ENCODE measurements at regions of chr17 and their contacts with region 1.

Region 1: DNA sequence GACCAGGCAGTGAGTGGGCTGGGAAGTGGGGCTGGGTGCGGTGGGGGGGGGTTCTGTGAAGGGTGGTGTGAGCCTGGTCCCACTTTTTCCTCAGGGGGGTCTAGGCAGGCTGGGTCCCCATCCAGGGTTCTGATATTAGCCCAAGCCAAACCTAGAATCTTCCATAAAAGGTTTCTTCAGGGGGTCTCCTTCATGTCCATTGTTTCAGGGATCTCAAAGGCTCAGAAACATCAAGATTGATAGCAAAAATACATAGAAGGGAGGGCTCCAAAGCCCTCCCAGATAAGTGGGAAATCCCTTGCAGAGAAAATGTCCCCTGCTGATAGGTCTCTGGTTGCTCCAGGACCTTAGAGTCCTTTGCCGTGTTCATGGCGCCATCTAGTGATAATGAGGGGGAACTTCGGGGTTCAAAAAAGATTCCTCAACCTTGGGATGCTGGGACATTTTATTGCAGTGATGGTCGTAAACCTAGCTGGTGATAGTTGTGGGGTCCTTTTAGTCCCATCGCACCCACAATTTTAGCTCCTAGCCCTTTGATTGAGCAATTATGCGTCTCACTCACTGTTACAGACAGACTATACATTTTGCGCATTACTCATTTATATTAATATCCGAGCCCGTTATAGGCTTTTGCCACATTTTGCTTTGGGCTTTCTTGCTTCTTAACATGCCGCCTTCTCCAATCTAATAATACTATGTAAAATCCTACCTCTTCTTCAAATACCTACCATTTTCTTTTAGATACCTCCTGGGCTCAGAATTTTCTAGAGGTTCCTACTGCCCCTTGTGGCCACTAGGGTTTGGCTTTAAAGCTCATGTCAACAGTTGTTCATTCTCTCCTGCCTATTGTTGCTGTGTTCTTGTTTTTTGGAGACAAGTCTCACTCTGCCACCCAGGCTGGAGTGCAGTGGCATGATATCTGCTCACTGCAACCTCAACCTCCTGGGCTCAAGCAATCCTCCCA is 35.1 kb downstream of the IGF2BP1 start:
- DNase-seq: no peak
- H3K4me3 ChIP-seq: no peak overlapping the region
- H3K27ac ChIP-seq: no peak overlapping the region
- H3K4me1 ChIP-seq: peaks cover 0 to 4% (median 2%) of the 10 kb centered on the region in 4 donors
- H3K27me3 ChIP-seq: peaks cover 0 to 36% (median 0%) of the 10 kb centered on the region in 4 donors
- CTCF ChIP-seq: peak; percentile 63 to 70 (median 66)
- EP300 ChIP-seq: no peak
- POLR2A ChIP-seq: no peak

Region 2: DNA sequence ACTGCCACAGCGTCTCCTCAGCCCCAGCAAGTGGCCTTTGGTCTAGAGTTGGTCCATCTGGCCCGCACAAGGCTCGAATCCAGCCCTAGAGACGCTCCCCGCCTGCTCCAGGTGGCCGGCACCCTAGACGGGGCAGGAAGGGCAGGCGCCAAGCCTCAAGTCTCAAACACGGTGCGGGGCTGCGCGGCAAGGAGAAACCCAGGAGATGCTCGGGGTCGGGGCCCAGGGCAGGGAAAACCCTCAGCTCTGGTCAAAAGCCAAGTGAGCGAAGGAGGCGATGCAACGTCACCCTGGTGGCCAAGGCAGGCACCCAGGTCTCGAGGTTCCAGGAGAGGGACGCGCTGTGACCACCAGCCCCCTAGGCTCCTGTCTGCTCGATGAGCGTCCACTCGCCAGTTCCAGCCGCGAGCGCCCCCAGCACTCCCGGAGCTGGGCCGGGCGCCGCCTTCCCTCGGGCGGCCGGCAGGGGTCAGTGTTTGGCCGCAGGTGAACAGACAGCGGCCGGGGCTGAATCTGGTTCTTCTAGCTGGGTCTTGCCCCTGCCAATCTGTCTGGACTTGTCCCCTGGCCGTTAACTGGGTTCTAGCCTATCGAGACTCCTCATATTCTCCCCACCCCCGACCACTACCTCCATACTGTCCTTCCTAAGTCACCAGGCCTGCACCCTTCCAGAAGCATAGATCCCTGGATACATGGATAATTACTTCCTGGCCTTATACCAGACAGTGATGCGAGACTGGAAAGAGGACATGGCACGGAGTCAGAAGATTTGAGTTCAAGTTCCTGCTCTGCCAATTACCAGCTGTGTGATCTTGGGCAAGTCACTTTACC is 353.9 kb before region 1 on chr17:
- intact Hi-C with region 1: loop called (anchors 5 kb)
- DNase-seq: no peak
- H3K4me3 ChIP-seq: peak overlapping the region in 1 of 4 donors; percentile 21
- H3K27ac ChIP-seq: no peak overlapping the region
- H3K4me1 ChIP-seq: peaks cover 0 to 9% (median 8%) of the 10 kb centered on the region in 4 donors
- H3K27me3 ChIP-seq: peaks cover 0 to 72% (median 9%) of the 10 kb centered on the region in 4 donors
- CTCF ChIP-seq: peak; percentile 83 to 95 (median 93)
- EP300 ChIP-seq: no peak
- POLR2A ChIP-seq: no peak

Region 3: DNA sequence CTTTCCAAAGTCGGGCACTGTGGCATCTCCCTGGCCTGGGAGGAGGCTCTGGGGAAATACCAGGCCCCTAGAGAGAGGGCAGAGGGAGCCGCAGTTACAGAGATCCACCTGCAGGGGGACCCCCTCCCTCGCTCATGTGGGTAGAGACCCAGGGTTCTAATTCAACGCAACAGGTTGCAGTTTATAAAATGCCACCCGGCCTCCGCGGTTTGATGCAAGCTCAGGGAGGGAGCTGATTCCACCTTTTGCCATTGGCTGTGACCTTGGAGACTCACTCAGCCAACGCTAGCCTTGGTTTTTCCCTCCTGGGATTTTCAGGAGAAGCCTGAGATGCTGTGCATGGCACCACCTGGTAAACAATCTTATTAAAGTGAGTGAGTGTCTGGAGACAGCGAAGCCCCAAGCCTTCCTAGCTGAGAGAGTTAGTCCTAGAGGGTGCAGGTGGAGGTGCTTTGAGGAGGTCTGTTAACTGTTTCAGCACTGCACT is 227.3 kb before region 1 on chr17:
- intact Hi-C with region 1: loop called (anchors 10 kb)
- DNase-seq: no peak
- H3K4me3 ChIP-seq: no peak overlapping the region
- H3K27ac ChIP-seq: no peak overlapping the region
- H3K4me1 ChIP-seq: peaks cover 3 to 29% (median 24%) of the 10 kb centered on the region in 4 donors
- H3K27me3 ChIP-seq: peaks cover 0 to 4% (median 0%) of the 10 kb centered on the region in 4 donors
- CTCF ChIP-seq: peak; percentile 90 to 96 (median 95)
- EP300 ChIP-seq: no peak
- POLR2A ChIP-seq: no peak

Region 4: GRCh38 chr17:48830840-48831548 is 201.3 kb before region 1 on chr17 and contains the start of gene CALCOCO2:
- intact Hi-C with region 1: no loop called
- DNase-seq: peak; percentile 99
- H3K4me3 ChIP-seq: peak within 1 kb of the TSS; percentile 77 to 96 (median 88)
- H3K27ac ChIP-seq: peak within 1 kb of the TSS; percentile 93 to 97 (median 96)
- H3K4me1 ChIP-seq: peaks cover 46 to 49% (median 48%) of the 10 kb centered on the region in 4 donors
- H3K27me3 ChIP-seq: no peaks in the 10 kb centered on the region
- CTCF ChIP-seq: peak in 1 of 3 experiments; percentile 6
- EP300 ChIP-seq: no peak
- POLR2A ChIP-seq: peak; percentile 90
- total RNA-seq, gene CALCOCO2: 157 to 210 (median 183) TPM

Region 5: GRCh38 chr17:48892940-48893645 is 139.2 kb before region 1 on chr17:
- intact Hi-C with region 1: loop called (anchors 10 kb)
- DNase-seq: no peak
- H3K4me3 ChIP-seq: peak overlapping the region; percentile 68 to 85 (median 76)
- H3K27ac ChIP-seq: peak overlapping the region; percentile 79 to 88 (median 81)
- H3K4me1 ChIP-seq: peaks cover 18 to 27% (median 25%) of the 10 kb centered on the region in 4 donors
- H3K27me3 ChIP-seq: no peaks in the 10 kb centered on the region
- CTCF ChIP-seq: no peak
- EP300 ChIP-seq: no peak
- POLR2A ChIP-seq: no peak

Region 6: DNA sequence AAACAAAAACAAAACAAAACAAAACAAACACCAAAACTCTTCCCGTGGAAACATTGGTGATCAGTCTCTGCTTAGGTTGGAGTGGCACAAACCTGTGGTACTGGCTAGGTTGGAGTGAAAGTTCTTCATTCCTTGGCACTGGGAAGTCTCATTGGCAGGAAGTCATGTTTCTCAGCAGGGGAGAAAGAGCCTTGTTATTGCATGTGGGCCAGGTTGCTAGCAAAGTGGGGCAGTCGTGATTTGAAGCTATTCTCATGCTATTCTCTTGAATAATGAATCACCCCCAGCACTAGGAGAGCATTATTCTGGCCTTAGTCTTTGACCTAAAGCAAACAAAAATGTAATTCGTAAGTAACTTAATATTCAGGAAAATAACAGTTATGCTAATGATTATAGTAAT is 76.1 kb after region 1 on chr17:
- intact Hi-C with region 1: no loop called
- DNase-seq: no peak
- H3K4me3 ChIP-seq: no peak overlapping the region
- H3K27ac ChIP-seq: no peak overlapping the region
- H3K4me1 ChIP-seq: no peaks in the 10 kb centered on the region
- H3K27me3 ChIP-seq: peaks cover 0 to 10% (median 0%) of the 10 kb centered on the region in 4 donors
- CTCF ChIP-seq: no peak
- EP300 ChIP-seq: no peak
- POLR2A ChIP-seq: no peak